SK-MEL-5 (cell line): ENCODE measurements at regions of chr17 and their contacts with region 1.

Region 1: DNA sequence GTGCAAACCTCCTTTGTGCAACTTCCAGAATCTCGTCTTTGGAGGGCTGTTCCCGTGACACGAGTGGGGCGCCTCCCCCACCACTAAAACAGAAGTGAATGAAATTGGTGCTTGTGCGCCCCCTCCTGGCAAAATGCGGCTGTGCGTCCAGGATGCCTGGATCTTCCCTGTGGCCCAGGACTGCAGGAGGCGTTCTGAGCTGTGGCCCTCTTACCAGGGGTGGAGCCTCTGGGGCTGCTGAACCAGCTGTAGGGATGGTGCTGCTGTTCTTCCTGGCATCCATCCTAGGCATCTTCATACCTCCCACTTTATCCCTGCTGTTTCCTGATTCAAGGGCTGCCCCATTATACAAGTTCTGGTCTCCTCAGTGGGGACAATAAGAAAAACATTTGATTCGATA is 18.5 kb upstream of the NAGLU start:
- DNase-seq: peak; percentile 89

Region 2: DNA sequence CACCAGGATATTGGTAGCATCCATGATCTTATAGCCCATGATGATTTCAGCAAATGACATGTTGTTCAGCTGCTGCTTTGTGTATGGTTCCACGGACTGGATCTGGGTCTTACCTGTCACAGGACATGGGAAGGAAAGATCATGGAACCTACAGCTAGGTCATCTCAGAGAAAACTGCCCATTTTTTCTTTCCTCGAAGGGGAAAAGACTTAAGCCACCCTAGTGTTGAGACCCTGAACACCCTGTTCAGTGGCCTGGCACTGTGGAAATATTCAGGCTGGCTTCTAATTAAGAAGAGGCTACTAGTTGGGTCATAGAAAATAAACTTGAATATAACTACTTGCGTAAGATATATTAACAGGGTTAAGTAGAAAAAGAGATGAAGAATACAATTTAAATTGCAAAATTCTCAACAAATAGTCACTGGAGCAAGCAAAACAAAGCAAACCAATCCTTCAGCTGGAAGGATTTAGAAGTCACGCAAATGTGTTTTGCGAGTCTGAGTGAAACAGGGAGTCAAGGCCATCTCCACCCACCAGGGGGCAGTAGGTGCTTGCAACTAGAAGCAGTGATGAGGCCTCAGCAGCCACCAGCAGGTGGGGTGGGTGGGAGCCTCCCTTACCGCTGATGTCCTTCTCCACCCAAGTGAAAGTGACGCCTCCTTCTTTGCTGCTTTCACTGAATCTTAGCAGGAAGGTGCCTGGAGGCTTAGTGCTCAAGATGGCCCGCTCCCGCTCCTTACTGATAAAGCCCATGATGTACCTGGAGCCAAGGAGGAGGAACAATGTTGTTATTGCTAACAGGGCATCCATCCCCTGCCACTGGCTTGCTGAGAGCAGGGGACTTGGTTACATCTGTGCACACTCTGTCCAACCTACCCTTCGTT is 194.9 kb before region 1 on chr17:
- in situ Hi-C with region 1: loop called (anchors 25 kb)
- DNase-seq: peak; percentile 93